ENCODE measurements at regions of chr22 and their contacts with region 1.

Region 1: GRCh38 chr22:40525249-40525884 is 111.2 kb downstream of the MRTFA start:
- DNase-seq: peak; percentile 48
- H3K4me3 Mint-ChIP-seq: no peak overlapping the region
- H3K27ac Mint-ChIP-seq: peak overlapping the region; percentile 58
- H3K4me1 Mint-ChIP-seq: peaks cover 18% of the 10 kb centered on the region
- H3K27me3 Mint-ChIP-seq: no peaks in the 10 kb centered on the region

Region 2: GRCh38 chr22:40645579-40646197 is 120.3 kb after region 1 on chr22:
- intact Hi-C with region 1: loop called (anchors 1 kb)
- DNase-seq: no peak
- H3K4me3 Mint-ChIP-seq: no peak overlapping the region
- H3K27ac Mint-ChIP-seq: no peak overlapping the region
- H3K4me1 Mint-ChIP-seq: peaks cover 20% of the 10 kb centered on the region
- H3K27me3 Mint-ChIP-seq: no peaks in the 10 kb centered on the region

Measured in activated T-helper 1 cell treated with anti-CD3 and anti-CD28 coated beads, Interleukin-12 subunit alpha, Interleukin-12 subunit beta, Interleukin-2, Interleukin-4 antibody, amounts not matched to agents 30 ng/mL and 10 ng/mL and 1 ng/mL, durations not matched to agents 14 hours and 24 hours and 36 hours (primary cell).